Activated T-helper 2 cell treated with anti-CD3 and anti-CD28 coated beads, Interferon-gamma antibody, Interleukin-2, Interleukin-4, amounts not matched to agents 10 μg/mL and 5 μg/mL and 100 μg/mL, durations not matched to agents 14 hours and 24 hours and 36 hours (primary cell): ENCODE measurements at regions of chrX and their contacts with region 1.

Region 1: DNA sequence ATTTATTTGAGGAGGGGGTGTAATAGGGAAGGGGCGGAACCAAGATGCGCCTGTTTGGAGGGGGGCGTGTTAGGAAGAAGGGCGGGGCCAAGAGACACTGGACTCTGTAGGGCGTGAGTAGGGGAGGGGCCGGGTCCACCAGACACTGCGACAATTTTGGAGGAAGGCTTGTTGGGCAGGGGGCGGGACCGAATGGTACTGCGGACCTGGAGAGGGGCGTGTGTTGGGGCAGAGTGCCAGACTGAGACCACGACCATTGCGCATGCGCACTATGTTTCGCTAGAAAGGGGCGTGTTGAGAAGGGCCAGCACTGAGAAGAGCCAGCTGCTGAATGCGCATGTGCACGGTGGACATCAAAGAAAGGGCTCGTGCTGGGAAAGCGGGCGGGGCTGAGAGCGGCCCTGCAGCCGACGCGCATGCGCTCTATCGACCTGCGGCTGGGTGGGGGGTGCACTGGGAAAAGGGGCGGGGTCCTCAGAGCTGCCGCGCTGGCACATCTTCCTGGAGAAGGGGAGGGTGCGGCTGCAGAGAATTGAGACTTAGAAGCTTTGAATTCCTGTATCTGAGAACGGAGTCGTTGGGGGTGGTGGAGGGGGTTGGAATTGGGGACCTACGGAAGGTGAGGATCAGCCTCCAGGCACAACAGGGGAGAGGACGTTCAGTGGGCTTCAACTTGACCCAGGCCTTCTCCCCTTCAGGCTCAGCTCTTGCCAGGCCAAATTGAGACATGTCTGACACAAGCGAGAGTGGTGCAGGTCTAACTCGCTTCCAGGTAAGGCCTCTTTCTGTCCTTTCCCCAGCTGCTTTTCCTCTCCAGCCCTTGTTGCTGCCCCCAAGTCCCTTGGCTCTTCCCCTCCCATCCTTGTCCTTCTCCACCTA is 1.3 kb downstream of the MAGED2 start:
- DNase-seq: peak; percentile 88
- H3K4me3 Mint-ChIP-seq: peak overlapping the region; percentile 89
- H3K27ac Mint-ChIP-seq: peak overlapping the region; percentile 84
- H3K4me1 Mint-ChIP-seq: peaks cover 8% of the 10 kb centered on the region
- H3K27me3 Mint-ChIP-seq: peaks cover 14% of the 10 kb centered on the region

Region 2: DNA sequence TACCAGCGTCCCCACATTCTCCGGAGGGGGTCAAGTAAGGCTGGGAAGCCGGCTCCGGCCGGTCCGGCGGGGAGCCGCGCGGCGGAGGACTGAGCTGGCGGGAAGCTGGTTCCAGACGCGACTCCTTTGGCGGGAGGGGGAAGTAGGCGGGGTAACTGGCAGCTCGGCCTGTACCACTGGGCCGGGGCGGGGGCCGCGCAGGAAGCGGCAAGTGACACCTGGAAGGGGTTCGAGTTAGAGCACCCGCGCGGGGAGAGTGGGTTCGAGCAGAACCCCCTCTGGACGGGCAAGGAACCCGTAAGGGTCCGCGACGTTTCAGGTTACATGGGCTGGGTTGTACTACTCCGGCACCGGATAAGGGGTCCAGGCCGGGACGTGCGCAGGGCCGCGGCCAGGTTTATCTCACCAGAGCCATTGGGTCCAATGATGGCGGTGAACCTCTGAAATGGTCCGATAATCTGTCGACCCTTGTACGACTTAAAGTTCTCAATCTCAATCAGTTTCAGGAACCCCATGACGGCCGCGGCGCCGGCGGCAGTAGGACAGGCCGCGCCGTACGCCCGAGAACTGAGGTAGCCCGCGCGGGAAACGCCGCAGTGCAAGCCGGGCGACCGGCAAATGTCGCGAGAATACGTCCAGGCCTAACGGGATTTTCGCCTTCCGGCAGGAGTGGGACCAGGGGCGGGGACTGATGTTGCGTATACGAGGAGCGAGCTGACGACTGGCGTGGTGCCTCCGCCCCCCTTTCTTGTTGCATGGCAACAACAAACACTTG is 1386.6 kb before region 1 on chrX and contains the start of gene SMC1A:
- intact Hi-C with region 1: loop called (anchors 10 kb)
- DNase-seq: peak; percentile 94
- H3K4me3 Mint-ChIP-seq: peak within 1 kb of the TSS; percentile 95
- H3K27ac Mint-ChIP-seq: peak within 1 kb of the TSS; percentile 79
- H3K4me1 Mint-ChIP-seq: peaks cover 25% of the 10 kb centered on the region
- H3K27me3 Mint-ChIP-seq: no peaks in the 10 kb centered on the region
- total RNA-seq, gene SMC1A: 134 and 136 TPM in 2 replicates

Region 3: DNA sequence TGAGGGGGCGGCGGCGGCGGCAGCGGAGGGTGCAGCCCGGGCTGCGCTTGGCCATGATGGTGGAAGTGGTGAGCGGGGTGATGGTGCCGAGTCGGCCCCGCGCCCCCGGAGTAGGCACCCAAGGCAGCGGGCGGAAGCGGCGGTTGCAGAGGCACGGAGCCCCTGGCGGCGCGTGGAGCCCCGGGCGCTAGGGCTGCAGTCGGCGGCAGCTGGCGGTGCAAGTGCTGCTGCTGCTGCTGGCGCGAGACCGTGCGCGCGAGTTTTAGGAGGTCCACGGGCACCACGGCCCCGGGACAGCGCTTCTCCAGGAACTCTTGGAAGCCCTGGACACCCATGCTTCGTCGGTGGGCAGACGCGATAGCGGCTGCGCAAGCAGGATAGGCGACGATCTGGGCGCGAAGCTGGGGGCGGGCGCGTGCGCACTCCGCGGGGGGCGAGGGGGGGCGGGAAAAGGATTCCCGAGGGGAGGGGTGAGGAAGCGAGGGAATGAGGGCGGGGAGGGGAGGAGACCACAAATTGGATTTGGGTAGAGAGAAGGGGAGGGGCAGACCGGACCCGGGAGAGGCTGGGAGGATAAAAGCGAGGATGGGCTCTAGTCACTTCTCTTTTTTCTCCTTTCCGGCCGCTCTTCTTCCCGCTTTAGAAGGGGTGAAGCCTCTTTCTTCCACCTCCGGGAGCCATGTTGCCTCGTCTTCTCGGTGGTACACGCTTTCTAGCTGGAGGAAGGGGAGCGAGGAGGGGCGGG is 625.8 kb before region 1 on chrX and contains the start of gene FAM120C:
- intact Hi-C with region 1: loop called (anchors 5 kb)
- DNase-seq: peak; percentile 50
- H3K4me3 Mint-ChIP-seq: peak within 1 kb of the TSS; percentile 86
- H3K27ac Mint-ChIP-seq: peak within 1 kb of the TSS; percentile 81
- H3K4me1 Mint-ChIP-seq: peaks cover 39% of the 10 kb centered on the region
- H3K27me3 Mint-ChIP-seq: no peaks in the 10 kb centered on the region
- total RNA-seq, gene FAM120C: 10.0 and 10.6 TPM in 2 replicates

Region 4: DNA sequence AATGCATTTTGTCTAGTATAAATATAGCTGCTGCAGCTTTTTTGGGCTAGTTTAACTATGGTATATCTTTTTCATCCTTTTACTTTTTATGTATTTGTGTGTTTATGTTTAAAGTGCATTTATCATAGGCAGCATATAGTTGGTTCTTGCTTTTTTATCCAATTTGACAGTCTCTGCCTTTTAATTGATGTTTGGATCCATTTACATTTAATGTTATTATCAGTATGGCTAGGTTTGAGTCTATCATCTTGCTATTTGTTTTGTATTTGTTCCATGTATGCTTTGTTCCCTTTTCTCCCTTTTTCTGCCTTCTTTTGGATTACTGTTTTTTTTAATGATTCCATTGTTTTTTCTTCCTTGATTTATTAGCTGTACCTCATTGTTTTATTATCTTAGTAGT is 238.5 kb before region 1 on chrX:
- intact Hi-C with region 1: no loop called
- DNase-seq: no peak
- H3K4me3 Mint-ChIP-seq: no peak overlapping the region
- H3K27ac Mint-ChIP-seq: no peak overlapping the region
- H3K4me1 Mint-ChIP-seq: no peaks in the 10 kb centered on the region
- H3K27me3 Mint-ChIP-seq: no peaks in the 10 kb centered on the region

Region 5: DNA sequence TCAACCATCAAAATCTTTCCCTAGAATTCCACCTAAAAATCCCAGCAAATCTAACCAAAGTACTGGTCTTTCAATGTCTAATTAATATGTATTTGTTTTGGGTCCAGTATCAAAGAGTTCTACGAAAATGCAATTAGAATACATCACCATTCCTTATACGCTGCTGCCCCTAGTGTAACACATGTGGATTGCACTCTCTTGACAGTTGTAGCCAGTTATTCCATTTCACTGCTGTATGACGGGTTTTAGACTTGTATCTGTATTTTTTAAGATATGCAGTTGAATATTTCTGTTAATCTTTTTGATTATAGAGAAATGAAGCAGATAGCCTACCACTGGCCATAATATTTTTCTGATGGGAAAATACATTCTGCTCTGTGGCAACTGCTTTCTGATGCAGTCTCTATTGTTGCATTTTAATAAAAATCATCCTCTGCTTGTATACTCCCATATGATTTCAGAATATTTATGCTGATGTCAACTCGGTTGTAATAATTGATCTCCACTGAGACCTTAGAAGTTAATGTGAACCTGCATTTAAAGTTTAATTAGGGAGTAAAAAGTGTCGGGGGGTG is 248.9 kb after region 1 on chrX:
- intact Hi-C with region 1: loop called (anchors 5 kb)
- DNase-seq: no peak
- H3K4me3 Mint-ChIP-seq: peak overlapping the region; percentile 42
- H3K27ac Mint-ChIP-seq: no peak overlapping the region
- H3K4me1 Mint-ChIP-seq: peaks cover 11% of the 10 kb centered on the region
- H3K27me3 Mint-ChIP-seq: peaks cover 2% of the 10 kb centered on the region

Region 6: DNA sequence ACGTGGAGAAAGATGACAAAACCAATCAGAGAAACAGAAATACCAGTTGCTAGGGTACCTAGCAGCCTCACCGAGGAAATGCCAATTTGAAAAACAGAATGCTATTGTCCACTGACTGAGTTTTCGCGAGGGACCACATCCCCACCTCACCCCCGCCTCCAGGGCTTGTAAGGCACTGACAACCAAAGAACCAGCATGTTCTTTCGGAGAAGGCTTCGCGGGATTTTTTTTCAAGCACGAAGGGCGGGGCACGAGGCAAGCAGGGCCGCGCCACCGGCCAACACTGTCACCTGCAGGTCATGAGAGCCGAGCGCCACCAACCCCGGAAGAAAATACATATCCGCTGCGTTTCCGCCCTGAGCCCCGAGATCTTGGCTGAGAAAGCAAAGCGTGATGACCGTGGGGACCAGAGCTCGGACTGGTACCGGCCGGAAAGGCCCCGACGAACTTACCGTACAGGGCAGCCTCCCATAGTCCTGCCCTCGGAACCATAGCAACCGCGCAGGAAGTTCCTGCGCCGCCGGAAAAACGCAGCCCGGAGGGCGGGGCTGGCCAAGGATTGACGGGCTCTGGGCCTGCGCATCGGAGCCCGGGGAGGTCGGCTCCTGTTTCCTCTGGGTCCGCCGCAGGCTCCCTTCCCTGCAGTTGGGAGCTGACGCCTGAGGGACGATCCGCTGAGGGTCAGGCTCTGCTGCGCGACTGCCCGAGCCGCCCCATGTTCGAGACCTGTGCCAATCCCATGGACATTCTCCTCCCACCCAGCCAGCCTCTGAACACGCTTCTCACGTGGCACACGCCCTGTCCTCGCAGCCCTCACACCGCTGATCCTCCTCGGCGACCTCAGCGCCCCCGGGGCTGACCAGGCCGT is 352.1 kb after region 1 on chrX:
- intact Hi-C with region 1: loop called (anchors 5 kb)
- DNase-seq: peak; percentile 83
- H3K4me3 Mint-ChIP-seq: peak overlapping the region; percentile 82
- H3K27ac Mint-ChIP-seq: peak overlapping the region; percentile 90
- H3K4me1 Mint-ChIP-seq: peaks cover 14% of the 10 kb centered on the region
- H3K27me3 Mint-ChIP-seq: peaks cover 13% of the 10 kb centered on the region